ENCODE measurements at regions of chr5 and their contacts with region 1.

Region 1: DNA sequence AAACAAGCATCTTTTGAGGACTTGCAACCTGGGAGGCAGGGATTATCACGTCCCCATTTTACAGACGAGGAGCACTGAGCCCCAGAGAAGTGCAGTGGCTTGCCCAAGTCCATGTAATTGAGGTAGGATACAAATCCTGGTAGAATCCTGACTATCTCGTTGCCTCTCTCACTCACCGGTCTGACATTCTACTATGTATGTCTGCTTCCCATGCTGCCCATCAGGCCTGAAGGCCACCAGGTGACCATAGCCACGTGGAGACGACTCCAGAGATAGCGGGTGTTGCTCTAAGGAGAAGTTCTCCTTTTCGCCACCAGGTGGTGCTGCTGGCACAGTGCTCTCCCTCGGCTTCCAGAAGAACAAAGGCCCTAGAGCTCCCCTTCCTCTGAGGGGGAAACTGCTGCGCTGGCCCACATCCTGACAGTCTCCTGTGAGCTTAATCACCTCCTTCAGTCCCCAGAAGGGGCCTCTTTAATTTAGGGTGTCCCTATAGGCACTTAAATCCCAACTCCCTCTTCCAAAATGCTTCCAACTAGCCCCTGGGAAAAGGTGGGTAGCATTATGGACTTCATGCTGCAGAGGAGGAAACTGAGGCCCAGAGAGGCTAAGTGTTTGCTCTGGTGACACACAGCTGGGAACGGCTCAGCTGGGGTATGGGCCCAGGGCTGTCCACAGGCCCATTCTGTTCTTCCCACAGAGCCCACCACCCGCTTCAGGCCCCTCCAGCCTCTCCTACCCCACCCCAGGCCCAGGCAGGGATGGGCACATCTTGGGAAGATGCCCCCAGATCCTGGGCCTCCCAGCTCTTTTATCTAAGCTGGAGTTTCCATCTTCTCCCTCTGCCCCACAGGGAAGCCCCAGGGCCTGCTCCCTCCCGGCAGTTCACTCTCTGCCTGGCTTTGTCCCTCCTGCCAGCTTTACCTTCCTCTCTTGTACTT is 6.4 kb downstream of the SLC34A1 start:
- DNase-seq: peak; percentile 81
- ATAC-seq: peak; percentile 78
- H3K4me3 ChIP-seq: no peak overlapping the region
- H3K27ac ChIP-seq: peak overlapping the region; percentile 63
- H3K4me1 ChIP-seq: peaks cover 24 to 43% of the 10 kb centered on the region in 2 experiments
- H3K27me3 ChIP-seq: no peaks in the 10 kb centered on the region
- CTCF ChIP-seq: peak in 2 of 3 experiments; percentile 94 to 96; a peak in 4 of 6 replicates
- POLR2A ChIP-seq: no peak
- RAD21 ChIP-seq: no peak

Region 2: GRCh38 chr5:177040814-177041420 is 349.7 kb before region 1 on chr5:
- CTCF ChIA-PET with region 1: no interaction called
- POLR2A ChIA-PET with region 1: no interaction called
- RAD21 ChIA-PET with region 1: no interaction called
- intact Hi-C with region 1: no loop called
- DNase-seq: no peak
- ATAC-seq: no peak; the same call in 1 of the 2 replicates
- H3K4me3 ChIP-seq: no peak overlapping the region
- H3K27ac ChIP-seq: no peak overlapping the region
- H3K4me1 ChIP-seq: no peaks in the 10 kb centered on the region
- H3K27me3 ChIP-seq: no peaks in the 10 kb centered on the region
- CTCF ChIP-seq: no peak
- POLR2A ChIP-seq: no peak
- RAD21 ChIP-seq: no peak

Region 3: GRCh38 chr5:177317959-177318377 is 72.7 kb before region 1 on chr5:
- CTCF ChIA-PET with region 1: interaction called, 3 read pairs
- POLR2A ChIA-PET with region 1: no interaction called
- RAD21 ChIA-PET with region 1: no interaction called
- intact Hi-C with region 1: loop called (anchors 5 kb)
- DNase-seq: peak; percentile 63
- ATAC-seq: peak; percentile 75
- H3K4me3 ChIP-seq: no peak overlapping the region
- H3K27ac ChIP-seq: no peak overlapping the region
- H3K4me1 ChIP-seq: peaks cover 3 to 16% of the 10 kb centered on the region in 2 experiments; a peak in 3 of 4 replicates
- H3K27me3 ChIP-seq: no peaks in the 10 kb centered on the region
- CTCF ChIP-seq: peak in 2 of 3 experiments; percentile 79 to 93; a peak in 4 of 6 replicates
- POLR2A ChIP-seq: no peak
- RAD21 ChIP-seq: no peak

Region 4: DNA sequence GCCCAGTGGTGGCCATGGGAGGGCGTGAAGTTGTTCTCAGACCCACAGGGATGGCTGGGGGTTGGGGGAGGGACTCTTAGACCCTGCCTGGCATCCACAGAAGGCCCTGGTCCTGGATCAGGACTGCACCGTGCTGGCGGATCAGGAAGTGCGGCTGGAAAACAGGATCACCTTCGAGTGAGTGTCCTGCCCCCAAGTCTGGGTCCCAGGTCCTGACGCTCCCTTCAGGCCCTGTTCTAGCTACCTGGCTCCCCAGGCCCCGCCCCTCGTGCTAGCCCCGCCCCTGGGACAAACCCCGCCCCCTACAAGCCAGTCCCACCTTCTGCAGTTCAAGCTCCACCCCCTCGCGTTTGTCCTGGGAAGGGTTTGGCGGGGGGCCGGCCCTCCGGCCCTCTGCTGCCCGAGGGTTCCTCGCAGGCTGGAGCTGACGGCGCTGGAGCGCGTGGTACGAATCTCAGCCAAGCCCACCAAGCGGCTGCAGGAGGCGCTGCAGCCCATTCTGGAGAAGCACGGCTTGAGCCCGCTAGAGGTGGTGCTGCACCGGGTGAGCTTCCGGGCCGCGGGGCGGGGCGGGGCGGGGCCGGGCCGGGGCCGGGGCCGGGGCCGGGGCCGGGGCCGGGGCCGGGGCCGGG is 20.0 kb before region 1 on chr5:
- CTCF ChIA-PET with region 1: interaction called, 50 read pairs
- POLR2A ChIA-PET with region 1: interaction called, 6 read pairs
- RAD21 ChIA-PET with region 1: interaction called, 6 to 8 read pairs
- intact Hi-C with region 1: no loop called
- DNase-seq: peak; percentile 94
- ATAC-seq: peak; percentile 90
- H3K4me3 ChIP-seq: peak overlapping the region; percentile 74 to 78
- H3K27ac ChIP-seq: peak overlapping the region; percentile 70
- H3K4me1 ChIP-seq: peaks cover 22 to 48% of the 10 kb centered on the region in 2 experiments
- H3K27me3 ChIP-seq: no peaks in the 10 kb centered on the region
- CTCF ChIP-seq: peak in 2 of 3 experiments; percentile 58 to 65; a peak in 4 of 6 replicates
- POLR2A ChIP-seq: no peak
- RAD21 ChIP-seq: no peak

Region 5: DNA sequence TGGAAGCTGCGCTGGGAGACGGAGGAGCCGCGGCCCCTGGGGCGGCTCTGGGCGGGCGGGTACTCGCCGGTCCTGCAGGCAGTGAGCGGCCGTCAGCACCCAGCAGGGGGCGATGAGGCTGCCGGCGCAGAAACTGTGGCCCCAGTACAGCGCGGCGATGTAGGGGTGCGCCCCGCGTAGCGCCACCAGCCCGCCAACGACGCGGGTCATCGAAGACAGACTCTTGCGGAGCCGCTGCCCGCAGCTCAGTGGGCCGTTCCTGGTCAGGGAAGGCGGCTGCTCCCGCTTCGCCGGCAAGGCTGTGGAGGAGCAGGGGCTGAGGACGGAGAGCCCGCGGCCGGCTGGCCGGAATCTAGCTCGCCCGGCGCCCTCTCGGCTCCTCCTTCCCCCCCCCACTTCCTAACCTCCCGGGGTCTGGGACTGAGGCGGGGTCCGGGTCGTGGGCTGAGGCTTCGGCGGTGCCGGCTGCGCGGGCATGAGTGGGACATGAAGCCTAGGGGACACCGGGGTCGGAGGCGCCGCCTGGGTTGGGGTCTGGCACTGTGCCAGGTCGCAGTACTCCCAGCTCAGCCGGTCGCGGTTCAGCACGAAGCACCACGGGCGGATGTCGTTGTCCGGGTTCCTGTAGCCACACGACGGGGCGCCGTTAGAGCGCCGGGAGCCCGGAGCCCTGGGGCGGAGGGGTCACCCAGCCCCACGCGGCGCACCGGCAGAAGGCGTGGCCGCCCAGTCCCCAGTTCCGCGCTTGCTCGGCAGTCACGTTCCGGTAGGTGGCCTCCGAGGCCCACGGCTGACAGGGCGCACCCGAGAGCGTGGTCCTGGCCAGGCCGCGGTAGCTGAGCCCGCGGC is 13.4 kb after region 1 on chr5:
- CTCF ChIA-PET with region 1: interaction called, 65 read pairs
- POLR2A ChIA-PET with region 1: interaction called, 14 read pairs
- RAD21 ChIA-PET with region 1: interaction called, 4 to 5 read pairs
- intact Hi-C with region 1: no loop called
- DNase-seq: peak; percentile 56
- ATAC-seq: peak; percentile 72
- H3K4me3 ChIP-seq: peak overlapping the region; percentile 69 to 82
- H3K27ac ChIP-seq: peak overlapping the region; percentile 99
- H3K4me1 ChIP-seq: peaks cover 15 to 37% of the 10 kb centered on the region in 2 experiments
- H3K27me3 ChIP-seq: no peaks in the 10 kb centered on the region
- CTCF ChIP-seq: peak in 2 of 3 experiments; percentile 55 to 69; a peak in 4 of 6 replicates
- POLR2A ChIP-seq: no peak
- RAD21 ChIP-seq: no peak

Region 6: DNA sequence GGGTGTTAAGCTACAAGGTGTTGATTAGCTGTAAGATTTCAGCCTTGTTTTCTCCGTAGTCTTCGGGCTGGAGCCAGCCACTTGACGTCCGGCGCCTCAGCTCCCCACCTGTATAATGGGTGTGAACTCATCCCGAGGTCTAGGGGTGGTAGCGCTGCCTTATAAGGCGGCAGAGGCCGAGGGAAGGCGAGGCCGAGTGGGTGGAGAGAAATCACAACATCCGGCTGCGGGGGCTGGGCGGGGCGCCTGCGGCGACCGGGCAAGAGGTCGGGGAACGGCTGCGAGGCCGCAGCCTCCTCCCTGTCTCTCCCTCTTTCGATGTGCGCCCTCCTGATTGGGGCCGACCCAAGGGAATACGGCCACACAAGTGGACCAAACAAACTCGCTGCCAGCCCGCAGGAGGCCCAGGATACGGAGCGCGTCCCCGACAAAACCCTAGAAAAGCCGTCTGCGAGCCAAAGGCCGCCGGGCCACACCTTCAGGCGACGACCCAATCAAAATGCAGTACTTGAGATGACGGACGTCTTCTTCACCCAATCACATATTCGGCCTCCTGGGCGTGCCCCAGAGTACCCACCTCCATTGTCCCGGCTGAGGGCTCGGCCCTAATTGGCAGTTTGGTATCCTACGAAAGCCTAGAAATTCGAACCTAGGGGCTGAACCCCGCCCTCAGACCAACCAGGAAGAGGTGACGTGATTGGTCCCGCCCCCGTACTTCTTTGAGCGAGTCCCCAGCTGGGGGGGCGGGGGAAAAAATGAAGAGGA is 35.4 kb after region 1 on chr5:
- CTCF ChIA-PET with region 1: interaction called, 10 read pairs
- POLR2A ChIA-PET with region 1: interaction called, 4 read pairs
- RAD21 ChIA-PET with region 1: interaction called, 3 read pairs
- intact Hi-C with region 1: no loop called
- DNase-seq: peak; percentile 100
- ATAC-seq: peak; percentile 90
- H3K4me3 ChIP-seq: peak overlapping the region; percentile 45 to 62
- H3K27ac ChIP-seq: peak overlapping the region; percentile 63
- H3K4me1 ChIP-seq: peaks cover 15 to 28% of the 10 kb centered on the region in 2 experiments
- H3K27me3 ChIP-seq: no peaks in the 10 kb centered on the region
- CTCF ChIP-seq: no peak
- POLR2A ChIP-seq: peak; percentile 42
- RAD21 ChIP-seq: no peak

Region 7: DNA sequence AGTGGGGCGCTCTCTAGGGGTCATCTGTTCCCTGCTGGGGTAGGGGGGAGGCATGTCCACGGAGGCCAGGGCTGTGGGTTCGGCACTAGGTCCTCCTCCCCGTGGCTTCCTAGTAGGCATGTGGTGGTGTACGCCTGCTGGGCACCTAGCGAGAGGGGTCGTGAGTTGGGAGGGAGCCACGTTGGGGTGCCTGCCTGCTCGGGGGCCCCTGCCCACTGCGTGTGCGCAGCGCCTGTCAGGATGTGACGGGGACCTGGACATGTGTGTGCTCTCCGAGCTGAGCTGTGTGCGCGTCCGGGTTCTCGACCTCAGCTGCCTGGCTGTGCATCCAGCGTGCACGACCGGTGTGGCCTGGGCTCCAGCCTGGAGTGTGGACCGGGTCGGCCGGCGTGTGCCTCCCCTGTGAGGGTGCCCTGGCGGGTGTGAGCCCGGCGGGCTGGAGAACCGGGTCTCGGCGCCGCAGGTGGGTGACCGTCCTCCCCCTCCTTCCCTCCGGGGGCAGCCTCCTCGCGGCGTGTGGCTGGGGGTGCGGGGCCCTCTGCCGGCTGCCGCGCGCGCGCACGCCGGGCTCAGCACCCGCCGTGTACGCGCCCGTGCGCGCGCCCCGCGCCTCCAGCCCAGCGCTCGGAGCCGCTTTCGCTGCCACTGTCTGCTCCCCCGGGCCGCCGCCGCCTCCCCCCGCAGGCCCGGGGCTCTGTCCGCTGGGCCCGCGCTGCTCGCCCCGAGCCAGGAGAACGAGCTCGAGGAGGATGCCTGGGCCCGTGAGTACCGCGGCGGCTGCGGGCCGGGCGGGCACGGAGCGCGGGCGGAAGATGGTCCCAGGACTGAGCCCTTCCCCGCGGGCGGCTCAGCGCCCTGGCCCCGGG is 55.8 kb after region 1 on chr5 and contains the start of gene PRR7:
- CTCF ChIA-PET with region 1: interaction called, 16 read pairs
- POLR2A ChIA-PET with region 1: interaction called, 9 read pairs
- RAD21 ChIA-PET with region 1: interaction called in 1 of 2 experiments, 3 read pairs
- intact Hi-C with region 1: no loop called
- DNase-seq: no peak
- ATAC-seq: peak; percentile 44
- H3K4me3 ChIP-seq: peak within 1 kb of the TSS; percentile 55 to 86
- H3K27ac ChIP-seq: peak within 1 kb of the TSS; percentile 95
- H3K4me1 ChIP-seq: peaks cover 9 to 56% of the 10 kb centered on the region in 2 experiments
- H3K27me3 ChIP-seq: no peaks in the 10 kb centered on the region
- CTCF ChIP-seq: no peak
- POLR2A ChIP-seq: no peak
- RAD21 ChIP-seq: no peak
- total RNA-seq, gene PRR7: 39.9 TPM

Region 8: GRCh38 chr5:177982072-177982727 is 591.6 kb after region 1 on chr5:
- CTCF ChIA-PET with region 1: no interaction called
- POLR2A ChIA-PET with region 1: no interaction called
- RAD21 ChIA-PET with region 1: no interaction called
- intact Hi-C with region 1: no loop called
- DNase-seq: peak; percentile 19
- ATAC-seq: peak; percentile 89
- H3K4me3 ChIP-seq: no peak overlapping the region
- H3K27ac ChIP-seq: no peak overlapping the region
- H3K4me1 ChIP-seq: peaks cover 0 to 3% of the 10 kb centered on the region in 2 experiments; a peak in 1 of 4 replicates
- H3K27me3 ChIP-seq: no peaks in the 10 kb centered on the region
- CTCF ChIP-seq: peak; percentile 55 to 85 (median 65)
- POLR2A ChIP-seq: no peak
- RAD21 ChIP-seq: peak; percentile 84

Measured in HCT116 (cell line).